ENCODE measurements at regions of chr19 and their contacts with region 1.

Region 1: DNA sequence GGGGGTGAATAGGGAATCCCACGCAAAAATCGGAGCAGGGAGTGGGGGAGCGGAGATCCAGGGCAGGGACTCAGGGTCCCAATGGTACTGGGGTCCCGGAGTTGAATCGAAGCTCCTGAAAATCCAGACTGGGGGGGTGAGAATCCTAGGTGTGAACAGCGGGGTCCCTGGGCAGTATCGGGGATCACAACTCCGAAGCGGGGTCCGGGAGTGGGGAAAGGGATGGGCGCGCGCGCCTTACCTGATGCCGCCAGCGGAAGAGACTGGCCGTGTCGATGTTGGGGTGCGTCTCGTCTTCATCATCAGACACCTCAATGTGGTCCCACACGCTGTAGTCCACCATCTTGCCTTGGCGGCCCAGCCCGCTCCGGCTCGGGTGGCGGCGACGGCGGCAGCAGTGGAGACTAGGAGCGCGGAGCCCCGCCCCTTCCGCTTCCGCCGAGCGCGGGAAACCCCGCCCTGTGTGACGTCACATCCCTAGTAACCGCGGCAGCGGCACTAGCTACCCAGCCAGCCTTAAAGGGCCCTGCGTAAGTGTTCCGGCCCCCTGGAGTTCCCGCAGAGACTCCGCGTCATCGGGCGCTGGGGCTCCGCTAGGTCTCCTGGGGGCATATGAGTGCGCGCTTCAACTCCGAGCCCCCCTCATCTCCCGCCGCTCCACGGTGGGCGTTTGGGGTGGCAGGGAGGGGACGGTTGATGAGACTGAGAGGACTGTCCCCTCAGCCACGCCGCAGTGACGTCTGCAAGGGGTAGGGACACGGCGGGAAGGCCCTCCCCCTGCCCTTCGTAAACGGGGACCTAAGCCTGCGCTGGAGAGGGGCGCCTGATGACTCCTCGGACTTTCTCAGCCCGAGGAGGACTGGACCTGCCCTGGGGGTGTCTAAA is at the start of gene CDC37:
- H3K4me3 ChIP-seq: peak within 1 kb of the TSS; percentile 99
- H3K27ac ChIP-seq: peak within 1 kb of the TSS; percentile 73
- H3K4me1 ChIP-seq: peaks cover 8% of the 10 kb centered on the region
- CTCF ChIP-seq: no peak

Region 2: DNA sequence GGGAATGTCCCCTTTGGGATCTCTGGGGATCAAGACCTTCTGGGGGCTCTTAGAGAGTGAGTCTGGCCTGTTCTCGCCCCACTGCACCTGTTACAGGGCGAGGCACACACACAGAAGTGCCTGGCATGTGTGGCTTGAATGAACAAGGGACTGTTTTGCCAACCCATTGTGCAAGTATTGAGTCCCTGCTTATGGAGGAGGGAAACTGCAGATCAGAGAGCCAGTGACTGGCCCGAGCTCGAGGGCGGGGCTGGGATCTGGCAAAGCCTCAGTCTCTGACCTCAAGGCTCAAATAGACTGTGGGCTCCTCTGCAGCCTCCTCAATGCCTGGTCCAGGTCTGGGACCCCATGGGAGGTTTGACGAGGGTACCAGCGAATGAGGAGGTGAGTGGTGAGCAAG is 75.6 kb before region 1 on chr19:
- CTCF ChIA-PET with region 1: no interaction called
- POLR2A ChIA-PET with region 1: no interaction called
- H3K4me3 ChIP-seq: no peak overlapping the region
- H3K27ac ChIP-seq: no peak overlapping the region
- H3K4me1 ChIP-seq: no peaks in the 10 kb centered on the region
- CTCF ChIP-seq: no peak

Region 3: DNA sequence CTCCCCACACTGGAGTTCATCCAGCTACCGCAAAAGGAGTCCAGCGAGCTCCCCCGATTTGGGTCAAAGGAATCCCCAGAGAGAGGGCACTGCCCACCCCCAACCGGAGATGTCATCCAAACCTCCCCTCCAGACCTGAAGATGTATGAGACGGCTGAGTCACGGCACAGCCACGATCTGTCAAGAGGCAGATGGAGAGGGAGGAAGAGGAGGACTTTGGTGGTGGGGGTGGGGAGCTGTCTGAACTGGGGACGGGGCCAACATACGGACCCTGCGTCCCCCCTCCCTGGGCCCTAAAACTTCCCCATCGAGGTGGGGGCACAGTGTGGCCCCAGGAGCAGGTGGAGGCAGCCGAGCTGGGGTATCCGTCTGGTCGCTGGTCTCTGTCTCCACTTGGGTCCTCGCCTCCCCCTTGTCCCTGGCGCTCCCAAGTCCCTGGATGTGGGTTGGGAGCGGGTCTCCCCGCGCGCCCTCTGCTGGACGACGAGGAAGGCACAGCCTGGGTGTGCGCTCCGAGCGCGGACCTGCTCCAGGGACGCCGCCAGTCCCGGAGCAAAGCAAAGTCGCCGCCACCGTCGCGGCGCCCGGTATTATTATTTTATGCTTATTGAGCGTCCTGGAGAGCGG is 20.7 kb after region 1 on chr19:
- CTCF ChIA-PET with region 1: interaction called, 193 read pairs
- POLR2A ChIA-PET with region 1: interaction called, 4 read pairs
- H3K4me3 ChIP-seq: peak overlapping the region; percentile 43
- H3K27ac ChIP-seq: no peak overlapping the region
- H3K4me1 ChIP-seq: no peaks in the 10 kb centered on the region
- CTCF ChIP-seq: peak; percentile 96

Region 4: DNA sequence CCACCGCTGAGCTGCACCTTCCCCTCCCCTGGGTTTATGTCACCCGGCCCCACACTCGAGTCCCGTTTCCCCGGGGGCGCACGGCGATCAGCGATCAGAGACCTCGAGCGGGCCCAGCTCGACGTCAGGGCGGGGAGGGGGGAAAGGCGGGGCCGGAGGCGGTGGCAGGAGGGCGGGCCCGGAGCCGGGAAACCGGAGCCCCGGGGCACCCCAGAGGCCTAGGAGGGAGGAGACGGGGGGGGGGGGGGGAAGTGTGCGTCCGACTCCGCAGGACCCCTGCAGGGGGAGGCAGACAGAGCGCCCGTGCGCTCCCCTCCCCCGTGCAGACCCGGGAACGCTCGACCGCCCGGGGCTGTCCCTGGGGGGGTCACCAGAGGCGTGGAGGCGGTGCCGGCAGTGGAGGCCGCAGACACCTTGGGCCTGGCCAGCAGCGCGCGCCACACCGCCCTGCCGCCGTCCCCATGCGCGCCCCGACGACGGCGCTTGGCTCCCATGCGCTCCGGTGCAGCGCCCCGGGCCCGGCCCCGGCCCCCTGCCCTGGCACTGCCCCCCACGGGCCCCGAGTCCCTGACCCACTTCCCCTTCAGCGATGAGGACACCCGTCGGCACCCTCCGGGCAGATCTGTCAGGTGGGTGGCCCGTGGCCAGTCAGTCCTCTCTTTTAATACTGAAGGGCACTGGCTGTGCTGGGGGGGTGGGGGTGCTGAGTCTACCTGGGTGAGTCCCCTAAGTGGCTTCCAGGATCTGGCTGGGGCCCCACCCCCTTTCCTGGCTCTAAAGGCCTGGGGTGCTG is 28.8 kb after region 1 on chr19:
- CTCF ChIA-PET with region 1: interaction called, 54 read pairs
- POLR2A ChIA-PET with region 1: no interaction called
- H3K4me3 ChIP-seq: no peak overlapping the region
- H3K27ac ChIP-seq: no peak overlapping the region
- H3K4me1 ChIP-seq: no peaks in the 10 kb centered on the region
- CTCF ChIP-seq: no peak

Region 5: DNA sequence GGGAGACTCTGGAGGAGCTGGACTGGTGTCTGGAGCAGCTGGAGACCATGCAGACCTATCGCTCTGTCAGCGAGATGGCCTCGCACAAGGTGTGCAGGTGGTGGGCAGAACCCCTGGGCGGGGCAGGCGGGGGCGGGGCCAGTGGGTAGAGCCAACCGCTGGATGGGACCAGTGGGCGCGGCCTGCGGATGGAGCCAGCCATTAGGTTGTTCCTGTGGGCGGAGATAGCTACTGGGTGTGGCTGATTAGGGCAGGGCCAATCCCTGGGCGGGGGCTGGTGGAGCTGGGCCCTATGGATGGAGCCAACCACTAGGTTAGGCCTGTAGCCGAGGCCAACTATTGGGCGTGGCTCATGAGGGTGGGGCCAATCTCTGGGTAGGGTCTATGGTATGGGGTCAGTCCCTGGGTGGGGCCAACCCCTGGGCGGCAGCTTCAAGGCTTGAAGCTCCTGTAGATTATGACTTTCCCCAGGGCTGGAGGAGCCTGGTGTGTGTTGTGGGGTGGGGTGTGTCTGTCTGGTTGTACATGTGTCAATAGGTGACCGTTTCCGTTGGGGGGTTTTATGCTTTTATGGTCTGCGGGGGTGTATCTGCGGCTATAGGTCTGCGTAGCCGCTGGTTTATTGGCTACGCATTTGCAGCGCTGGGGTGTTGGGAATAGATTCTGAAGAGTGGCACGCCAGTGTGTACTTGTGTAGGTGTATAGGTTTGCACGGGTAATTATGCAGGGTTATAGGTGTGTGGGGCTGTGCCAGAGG is 47.7 kb after region 1 on chr19:
- CTCF ChIA-PET with region 1: no interaction called
- POLR2A ChIA-PET with region 1: no interaction called
- H3K4me3 ChIP-seq: no peak overlapping the region
- H3K27ac ChIP-seq: no peak overlapping the region
- H3K4me1 ChIP-seq: no peaks in the 10 kb centered on the region
- CTCF ChIP-seq: no peak